ENCODE measurements at regions of chr3 and their contacts with region 1.

Region 1: GRCh38 chr3:150469943-150470738 is 62.0 kb downstream of the TSC22D2 start:
- DNase-seq: no peak
- ATAC-seq: peak; percentile 10
- H3K4me3 ChIP-seq: no peak overlapping the region; the same call in 1 of the 2 replicates
- H3K27ac ChIP-seq: peak overlapping the region; percentile 93
- H3K4me1 ChIP-seq: peaks cover 15 to 31% of the 10 kb centered on the region in 2 experiments; a peak in 4 of 5 replicates
- H3K27me3 ChIP-seq: no peaks in the 10 kb centered on the region
- CTCF ChIP-seq: no peak
- EP300 ChIP-seq: no peak
- POLR2A ChIP-seq: no peak
- RAD21 ChIP-seq: no peak

Region 2: DNA sequence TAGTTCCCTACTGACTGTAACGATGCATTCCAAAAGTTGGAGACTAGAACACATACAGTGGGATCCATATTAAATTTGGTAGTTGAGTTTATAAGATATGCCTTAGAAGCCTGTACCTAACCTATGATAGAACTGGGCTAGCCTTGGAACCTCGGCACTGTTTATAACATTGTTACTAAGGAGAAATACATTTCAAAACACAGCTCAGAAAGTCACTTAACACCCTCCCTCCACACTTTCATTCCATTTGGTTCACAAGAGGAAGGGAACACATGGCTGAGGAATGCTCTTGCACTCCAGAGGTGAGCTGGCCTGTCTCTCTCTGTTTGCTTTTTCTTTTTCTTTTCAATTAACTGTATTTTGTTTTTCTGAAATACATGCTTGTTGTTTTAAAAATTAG is 110.8 kb before region 1 on chr3:
- CTCF ChIA-PET with region 1: no interaction called
- POLR2A ChIA-PET with region 1: no interaction called
- in situ Hi-C with region 1: no loop called
- intact Hi-C with region 1: no loop called
- DNase-seq: no peak
- ATAC-seq: no peak
- H3K4me3 ChIP-seq: no peak overlapping the region
- H3K27ac ChIP-seq: no peak overlapping the region
- H3K4me1 ChIP-seq: no peaks in the 10 kb centered on the region
- H3K27me3 ChIP-seq: no peaks in the 10 kb centered on the region
- CTCF ChIP-seq: no peak
- EP300 ChIP-seq: no peak
- POLR2A ChIP-seq: no peak
- RAD21 ChIP-seq: no peak

Region 3: DNA sequence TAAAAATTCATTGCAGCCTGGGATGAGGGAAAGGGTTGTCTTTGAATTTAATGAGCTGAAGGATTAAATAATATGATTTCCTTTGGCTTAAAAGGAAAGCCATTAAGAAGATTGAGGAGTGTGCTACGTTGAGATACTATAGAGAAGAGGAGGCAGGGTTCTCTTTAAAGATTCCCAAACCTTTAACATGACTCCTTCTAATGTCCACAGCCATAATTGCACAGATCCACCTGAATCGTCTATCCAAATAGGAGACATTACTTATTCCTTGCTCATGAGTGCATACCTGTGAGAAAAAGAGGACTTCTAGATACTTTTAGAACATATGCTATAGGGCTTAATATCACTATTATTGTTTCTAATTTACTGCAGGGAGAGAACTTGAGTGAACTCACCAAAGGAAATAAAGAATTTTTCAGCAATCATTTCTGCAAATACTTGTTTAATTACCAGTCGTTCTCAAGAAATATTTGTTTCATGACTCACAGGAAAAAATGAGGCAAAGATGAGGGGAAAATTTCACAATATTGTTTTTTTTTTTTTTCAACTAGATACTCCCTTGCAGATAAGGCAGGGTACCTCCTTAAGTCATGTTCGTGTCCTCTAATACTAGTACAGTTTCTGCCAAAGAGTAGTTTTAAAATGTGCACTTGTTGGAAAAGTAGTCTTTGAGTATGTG is 1394.4 kb after region 1 on chr3:
- CTCF ChIA-PET with region 1: no interaction called
- POLR2A ChIA-PET with region 1: no interaction called
- in situ Hi-C with region 1: loop called (anchors 10 kb)
- intact Hi-C with region 1: no loop called
- DNase-seq: no peak
- ATAC-seq: no peak
- H3K4me3 ChIP-seq: no peak overlapping the region
- H3K27ac ChIP-seq: no peak overlapping the region
- H3K4me1 ChIP-seq: no peaks in the 10 kb centered on the region
- H3K27me3 ChIP-seq: no peaks in the 10 kb centered on the region
- CTCF ChIP-seq: no peak
- EP300 ChIP-seq: no peak
- POLR2A ChIP-seq: no peak
- RAD21 ChIP-seq: no peak